Right ventricle myocardium inferior (tissue), 1 donor: ENCODE measurements at regions of chr14 and their contacts with region 1.

Region 1: DNA sequence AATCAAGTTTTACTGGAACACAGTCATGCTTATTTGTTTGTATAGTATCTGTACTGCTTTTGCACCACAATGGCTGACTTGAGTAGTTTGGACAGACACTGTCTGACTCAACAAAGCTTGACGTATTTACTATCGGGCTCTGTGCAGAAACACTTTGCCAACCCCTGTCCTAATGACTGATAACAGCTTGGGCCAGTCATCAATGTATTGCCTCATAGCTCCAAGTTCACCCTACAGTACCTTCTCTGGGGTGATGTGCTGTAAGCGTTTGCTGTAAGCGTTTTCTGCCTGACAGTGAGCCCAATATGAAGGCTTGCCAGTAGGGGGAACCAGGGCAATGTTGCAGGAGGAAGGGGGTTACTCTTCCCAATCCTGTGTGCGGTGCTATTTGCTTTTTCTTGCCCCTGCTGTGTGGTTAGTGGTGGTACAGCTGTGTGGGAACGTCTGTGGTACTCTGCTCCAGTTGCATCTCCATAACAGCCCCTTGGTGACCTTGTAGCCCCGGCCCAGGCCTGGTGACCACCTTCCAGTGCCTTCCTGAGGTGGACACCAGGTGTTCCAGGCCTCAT is 5.4 kb upstream of the CCDC177 start:
- DNase-seq: no peak
- ATAC-seq: peak; percentile 51

Region 2: DNA sequence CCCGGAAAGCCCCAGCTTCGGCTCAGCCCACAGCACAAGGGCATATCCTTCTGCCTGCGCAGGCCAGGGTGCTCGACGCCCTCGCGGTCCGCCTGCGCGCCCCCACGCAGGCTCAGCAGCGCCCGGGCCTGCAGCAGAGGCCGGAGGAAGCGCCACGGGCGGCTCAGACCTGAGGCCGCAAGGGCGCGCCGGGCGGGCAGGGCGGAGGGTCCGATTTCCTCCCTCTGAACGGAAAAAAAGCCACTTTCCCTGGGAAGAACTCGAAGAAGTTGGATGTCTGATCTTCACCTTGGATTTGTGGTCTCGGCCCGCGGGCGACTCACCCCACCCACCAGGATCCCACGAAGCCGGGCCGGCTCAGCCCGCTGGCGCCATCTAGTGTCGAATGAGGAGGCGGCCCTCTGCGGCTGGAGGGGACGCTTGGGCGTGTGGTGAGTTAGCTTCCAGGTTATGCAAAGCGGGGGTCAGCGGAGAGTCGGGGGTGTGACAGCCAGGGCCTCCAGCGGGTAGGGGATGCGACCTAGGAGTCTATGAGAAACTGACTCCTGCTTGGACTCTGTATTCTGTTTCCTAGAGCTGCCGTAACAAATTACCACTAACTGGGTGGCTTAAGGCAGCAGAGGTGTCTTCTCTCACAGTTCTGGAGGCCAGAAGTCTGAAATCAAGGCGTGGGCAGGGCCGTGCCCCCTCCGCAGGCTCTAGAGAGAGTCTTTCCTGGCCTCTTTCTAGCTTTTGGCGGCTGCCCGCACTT is 146.8 kb after region 1 on chr14:
- intact Hi-C with region 1: loop called (anchors 1 kb)
- DNase-seq: peak; percentile 94
- ATAC-seq: peak; percentile 94